Activated CD8-positive, alpha-beta T cell treated with anti-CD3 and anti-CD28 coated beads for 36 hours (primary cell): ENCODE measurements at regions of chr10 and their contacts with region 1.

Region 1: GRCh38 chr10:61750929-61751471 is 88.3 kb downstream of the CABCOCO1 start:
- DNase-seq: peak; percentile 84
- ATAC-seq: peak; percentile 98
- H3K4me3 Mint-ChIP-seq: no peak overlapping the region
- H3K27ac Mint-ChIP-seq: peak overlapping the region; percentile 52
- H3K4me1 Mint-ChIP-seq: peaks cover 28% of the 10 kb centered on the region
- H3K27me3 Mint-ChIP-seq: no peaks in the 10 kb centered on the region
- CTCF ChIP-seq: peak; percentile 68

Region 2: GRCh38 chr10:61580608-61581007 is 170.4 kb before region 1 on chr10:
- CTCF ChIA-PET with region 1: no interaction called
- POLR2A ChIA-PET with region 1: no interaction called
- intact Hi-C with region 1: no loop called
- DNase-seq: no peak
- ATAC-seq: no peak
- H3K4me3 Mint-ChIP-seq: no peak overlapping the region
- H3K27ac Mint-ChIP-seq: no peak overlapping the region
- H3K4me1 Mint-ChIP-seq: no peaks in the 10 kb centered on the region
- H3K27me3 Mint-ChIP-seq: no peaks in the 10 kb centered on the region
- CTCF ChIP-seq: no peak

Region 3: DNA sequence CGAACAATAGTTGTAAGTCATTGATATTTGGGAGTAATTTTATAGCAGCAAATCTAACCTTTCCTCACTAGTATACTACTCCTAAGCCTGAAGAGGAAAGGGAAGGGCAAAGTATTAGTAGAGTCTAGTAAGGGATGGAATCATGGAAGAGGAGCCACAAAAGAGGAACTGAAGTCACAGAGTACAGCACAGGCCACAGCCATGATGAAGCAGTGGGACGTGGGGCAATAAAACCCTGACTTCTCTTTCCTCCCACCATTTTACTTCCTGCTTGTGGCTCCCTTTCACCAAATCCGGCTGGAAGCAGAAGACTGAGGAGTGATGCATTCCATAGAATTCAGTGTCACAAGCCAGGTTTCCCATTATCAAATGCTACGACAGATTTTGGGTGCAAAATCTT is 29.6 kb before region 1 on chr10:
- CTCF ChIA-PET with region 1: no interaction called
- POLR2A ChIA-PET with region 1: no interaction called
- intact Hi-C with region 1: no loop called
- DNase-seq: no peak
- ATAC-seq: no peak
- H3K4me3 Mint-ChIP-seq: no peak overlapping the region
- H3K27ac Mint-ChIP-seq: no peak overlapping the region
- H3K4me1 Mint-ChIP-seq: no peaks in the 10 kb centered on the region
- H3K27me3 Mint-ChIP-seq: peaks cover 3% of the 10 kb centered on the region
- CTCF ChIP-seq: no peak

Region 4: GRCh38 chr10:61760943-61761824 is 10.2 kb after region 1 on chr10:
- CTCF ChIA-PET with region 1: interaction called, 37 read pairs
- POLR2A ChIA-PET with region 1: no interaction called
- intact Hi-C with region 1: no loop called
- DNase-seq: no peak
- ATAC-seq: no peak
- H3K4me3 Mint-ChIP-seq: no peak overlapping the region
- H3K27ac Mint-ChIP-seq: no peak overlapping the region
- H3K4me1 Mint-ChIP-seq: peaks cover 13% of the 10 kb centered on the region
- H3K27me3 Mint-ChIP-seq: no peaks in the 10 kb centered on the region
- CTCF ChIP-seq: no peak

Region 5: DNA sequence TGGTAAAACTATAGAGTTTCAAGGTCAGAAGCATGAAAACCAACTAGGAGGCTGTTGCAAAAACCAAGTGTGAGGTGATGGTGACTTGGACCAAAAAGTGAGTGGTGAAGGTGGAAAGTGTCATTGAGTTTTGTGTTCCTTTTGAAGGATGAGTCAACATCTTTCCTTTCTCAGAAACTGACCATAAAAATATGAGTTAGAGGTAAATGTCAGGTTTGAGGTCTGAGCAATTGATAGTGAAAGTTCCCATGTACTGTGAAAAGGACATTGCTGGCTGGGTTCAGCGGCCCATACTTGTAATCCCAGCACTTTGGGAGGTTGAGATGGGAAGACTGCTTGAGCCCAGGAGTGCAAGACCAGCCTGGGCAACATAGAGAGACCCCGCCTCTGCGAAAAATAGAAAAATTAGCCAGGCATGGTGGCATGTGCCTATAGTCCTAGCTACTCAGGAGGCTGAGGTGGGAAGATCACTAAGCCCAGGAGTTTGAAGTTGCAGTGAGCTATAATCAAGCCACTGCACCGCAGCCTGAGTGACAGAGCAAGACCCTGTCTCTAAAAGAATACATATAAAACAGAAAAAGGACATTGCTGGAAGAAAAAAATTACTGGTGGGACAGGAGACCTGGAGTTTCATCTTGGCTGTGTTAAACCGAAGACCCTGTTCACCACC is 61.2 kb after region 1 on chr10:
- CTCF ChIA-PET with region 1: interaction called, 3 read pairs
- POLR2A ChIA-PET with region 1: no interaction called
- intact Hi-C with region 1: loop called (anchors 5 kb)
- DNase-seq: peak; percentile 4
- ATAC-seq: peak; percentile 66
- H3K4me3 Mint-ChIP-seq: no peak overlapping the region
- H3K27ac Mint-ChIP-seq: no peak overlapping the region
- H3K4me1 Mint-ChIP-seq: peaks cover 3% of the 10 kb centered on the region
- H3K27me3 Mint-ChIP-seq: peaks cover 10% of the 10 kb centered on the region
- CTCF ChIP-seq: no peak

Region 6: DNA sequence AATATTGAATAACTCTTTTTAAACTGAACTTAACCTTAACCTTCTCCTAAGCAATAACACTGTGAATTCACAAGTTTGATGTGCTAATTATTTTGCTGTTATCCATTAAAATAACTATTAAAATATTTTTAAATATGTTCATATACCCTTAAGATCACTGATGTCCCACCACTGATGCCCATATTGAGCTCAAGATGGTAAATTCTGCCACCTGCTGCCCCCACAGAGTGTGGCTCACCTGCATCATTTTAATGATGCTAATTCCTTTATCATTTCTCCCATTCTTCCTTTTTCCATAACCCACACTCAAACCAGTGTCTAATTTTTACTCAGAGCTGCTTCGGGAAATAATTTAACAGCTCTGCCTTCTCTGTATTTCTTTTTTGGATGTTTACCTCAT is 68.2 kb after region 1 on chr10:
- CTCF ChIA-PET with region 1: interaction called, 18 read pairs
- POLR2A ChIA-PET with region 1: no interaction called
- intact Hi-C with region 1: loop called (anchors 5 kb)
- DNase-seq: no peak
- ATAC-seq: no peak
- H3K4me3 Mint-ChIP-seq: no peak overlapping the region
- H3K27ac Mint-ChIP-seq: no peak overlapping the region
- H3K4me1 Mint-ChIP-seq: peaks cover 3% of the 10 kb centered on the region
- H3K27me3 Mint-ChIP-seq: no peaks in the 10 kb centered on the region
- CTCF ChIP-seq: no peak

Region 7: DNA sequence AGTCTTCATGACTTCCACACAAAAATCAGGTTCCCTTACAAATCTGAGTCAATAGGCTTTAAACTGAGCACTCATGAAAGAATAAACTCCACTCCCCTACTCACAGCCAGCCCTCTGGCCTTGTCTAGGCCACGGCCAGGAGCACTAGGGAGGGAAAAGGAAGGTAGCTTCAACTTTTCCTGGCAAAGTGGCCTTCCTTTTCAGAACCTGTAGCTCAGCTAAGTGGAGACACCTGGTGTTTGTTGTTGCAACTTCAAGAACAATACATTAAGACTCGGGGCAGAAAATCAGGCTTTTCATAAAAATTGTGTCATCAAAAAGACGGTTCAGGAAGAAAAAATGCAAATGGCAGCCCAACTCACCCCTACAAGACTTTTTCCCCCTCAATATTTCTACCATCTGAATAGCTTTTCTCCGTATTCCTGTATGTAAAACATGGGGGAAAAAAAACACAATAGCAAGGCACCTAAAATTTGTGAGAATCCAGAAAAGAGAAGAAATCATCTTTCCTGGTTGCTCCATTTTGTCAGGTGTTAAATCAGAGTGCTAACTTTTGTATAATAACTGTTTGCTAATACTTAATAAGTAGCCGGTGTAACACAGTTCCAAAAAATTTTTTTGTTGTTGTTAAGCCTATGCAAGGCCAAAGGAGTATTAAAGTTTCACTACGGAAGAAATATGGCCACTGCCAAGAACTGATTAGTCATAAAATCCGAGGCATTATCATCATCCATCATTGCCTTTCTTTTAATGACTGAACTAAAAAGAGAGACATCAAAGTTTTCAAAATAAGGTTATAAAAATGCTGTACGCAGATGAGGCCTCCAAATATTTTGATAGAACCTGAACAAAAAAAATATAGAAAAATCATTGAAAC is 84.3 kb after region 1 on chr10:
- CTCF ChIA-PET with region 1: interaction called, 46 read pairs
- POLR2A ChIA-PET with region 1: no interaction called
- intact Hi-C with region 1: no loop called
- DNase-seq: no peak
- ATAC-seq: no peak
- H3K4me3 Mint-ChIP-seq: no peak overlapping the region
- H3K27ac Mint-ChIP-seq: no peak overlapping the region
- H3K4me1 Mint-ChIP-seq: peaks cover 17% of the 10 kb centered on the region
- H3K27me3 Mint-ChIP-seq: no peaks in the 10 kb centered on the region
- CTCF ChIP-seq: peak; percentile 53

Region 8: GRCh38 chr10:61869774-61870525 is 119.0 kb after region 1 on chr10:
- CTCF ChIA-PET with region 1: interaction called, 33 read pairs
- POLR2A ChIA-PET with region 1: no interaction called
- intact Hi-C with region 1: no loop called
- DNase-seq: no peak
- ATAC-seq: no peak
- H3K4me3 Mint-ChIP-seq: no peak overlapping the region
- H3K27ac Mint-ChIP-seq: no peak overlapping the region
- H3K4me1 Mint-ChIP-seq: peaks cover 9% of the 10 kb centered on the region
- H3K27me3 Mint-ChIP-seq: peaks cover 10% of the 10 kb centered on the region
- CTCF ChIP-seq: no peak